ENCODE measurements at regions of chr5 and their contacts with region 1.

Region 1: DNA sequence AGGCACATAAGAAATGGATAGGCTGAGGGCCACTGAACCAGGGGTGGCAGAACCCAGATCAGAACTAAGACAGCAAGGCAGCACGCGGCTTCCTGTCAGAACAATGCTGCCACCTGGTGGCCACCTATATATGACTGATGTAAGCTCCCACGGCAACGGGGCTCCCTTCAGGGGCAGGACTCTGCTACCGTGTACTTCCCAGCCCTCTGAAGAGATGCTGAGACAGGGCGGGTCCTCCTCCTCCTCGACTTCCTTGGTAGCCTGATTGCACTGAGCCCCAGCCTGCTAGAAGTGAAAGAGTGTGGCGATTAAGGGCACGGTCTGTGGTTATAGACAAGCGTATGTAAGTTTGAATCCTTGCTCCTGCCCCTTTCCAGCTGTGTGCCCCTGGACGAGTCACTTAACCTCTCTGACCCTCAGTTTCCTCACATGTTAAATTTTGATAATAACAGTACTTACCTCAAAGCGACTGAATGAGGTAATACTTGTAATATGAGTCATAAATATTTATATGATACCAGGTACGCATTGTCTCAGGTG is 13.3 kb downstream of the RPS14 start:
- DNase-seq: peak; percentile 95
- H3K4me3 Mint-ChIP-seq: no peak overlapping the region
- H3K27ac Mint-ChIP-seq: peak overlapping the region; percentile 15
- H3K4me1 Mint-ChIP-seq: peaks cover 15% of the 10 kb centered on the region
- H3K27me3 Mint-ChIP-seq: peaks cover 11% of the 10 kb centered on the region

Region 2: DNA sequence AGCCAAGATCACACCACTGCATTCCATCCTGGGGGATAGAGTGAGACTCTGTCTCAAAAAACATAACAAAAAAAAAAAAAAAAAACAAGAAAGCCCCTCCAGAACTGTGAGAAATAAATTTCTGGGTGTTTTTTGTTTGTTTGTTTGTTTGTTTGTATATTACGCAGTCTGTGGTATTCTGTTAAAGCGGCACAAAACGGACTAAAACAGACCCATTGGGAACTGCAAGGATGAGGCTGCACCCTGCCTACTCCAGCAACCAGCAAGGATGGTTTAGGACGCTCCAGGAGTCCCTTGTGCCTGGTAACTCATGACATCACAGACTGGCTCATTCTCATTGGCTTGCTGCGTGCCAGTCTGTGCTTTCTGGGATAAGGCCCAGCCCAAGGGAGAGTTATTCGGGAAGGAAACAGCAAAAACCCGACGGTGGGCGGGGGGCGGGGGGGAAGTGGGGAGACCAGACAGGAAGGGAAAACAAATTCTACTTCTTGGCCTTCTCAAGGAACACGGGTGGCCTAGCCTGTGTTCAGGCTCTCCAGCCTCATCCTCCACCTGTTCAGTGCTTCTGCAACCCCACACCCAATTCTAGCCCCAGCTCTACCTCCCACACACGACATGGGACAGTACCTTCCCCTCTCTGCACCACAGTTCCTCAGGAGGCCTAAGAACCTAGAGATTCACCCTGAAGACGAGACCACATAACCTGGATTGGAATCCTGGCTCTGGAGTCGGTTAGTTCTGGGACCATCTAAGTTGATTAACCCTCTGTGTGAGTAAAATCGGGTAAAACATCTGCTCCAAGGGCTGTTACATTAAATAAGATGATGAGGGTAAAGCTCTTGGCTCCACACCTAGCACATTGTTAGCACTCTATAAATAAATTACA is 26.3 kb before region 1 on chr5:
- CTCF ChIA-PET with region 1: interaction called, 15 read pairs
- DNase-seq: peak; percentile 73
- H3K4me3 Mint-ChIP-seq: peak overlapping the region; percentile 94
- H3K27ac Mint-ChIP-seq: peak overlapping the region; percentile 99
- H3K4me1 Mint-ChIP-seq: peaks cover 46% of the 10 kb centered on the region
- H3K27me3 Mint-ChIP-seq: no peaks in the 10 kb centered on the region

Region 3: DNA sequence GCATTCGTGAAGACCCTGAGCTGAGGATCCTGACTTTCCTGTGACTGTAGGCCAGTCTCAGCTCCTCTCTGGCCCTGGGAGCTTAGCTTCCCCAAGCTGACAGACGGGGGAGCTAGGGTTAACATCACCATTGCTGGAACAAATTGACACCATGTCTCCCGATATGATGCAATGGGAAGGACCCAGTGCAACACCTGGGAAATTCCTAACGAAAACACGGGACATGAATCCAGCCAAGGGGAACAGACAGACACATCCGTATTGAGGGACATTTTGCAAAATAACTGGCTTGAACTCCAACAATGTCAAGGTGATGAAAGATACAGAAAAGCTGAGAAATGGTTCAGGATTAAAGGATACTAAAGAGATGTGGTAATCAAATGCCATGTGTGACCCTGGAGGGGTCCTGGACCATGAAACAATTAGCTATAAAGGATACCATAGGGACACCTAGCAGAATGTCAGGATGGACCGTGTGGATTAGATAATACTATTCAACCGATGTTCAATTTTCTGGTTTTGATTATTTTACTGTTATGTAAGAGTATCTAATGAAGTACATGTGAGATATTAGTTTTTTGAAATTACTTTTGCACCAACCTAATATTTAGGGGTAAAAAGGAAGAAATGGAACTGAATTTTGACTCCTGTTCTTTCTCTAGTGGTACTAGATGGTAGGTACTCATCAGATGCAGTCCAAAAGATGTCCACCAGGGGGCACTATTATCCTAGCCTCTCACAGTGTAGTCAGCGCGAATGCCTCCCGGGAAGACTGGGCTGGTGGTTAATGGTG is 124.4 kb after region 1 on chr5:
- CTCF ChIA-PET with region 1: no interaction called
- DNase-seq: peak; percentile 91
- H3K4me3 Mint-ChIP-seq: no peak overlapping the region
- H3K27ac Mint-ChIP-seq: no peak overlapping the region
- H3K4me1 Mint-ChIP-seq: no peaks in the 10 kb centered on the region
- H3K27me3 Mint-ChIP-seq: peaks cover 7% of the 10 kb centered on the region

Measured in activated naive CD4-positive, alpha-beta T cell treated with anti-CD3 and anti-CD28 coated beads, Interleukin-2, amount 10 ng/mL, durations not matched to agents 7 days and 5 days (primary cell).